ENCODE measurements at regions of chr2 and their contacts with region 1.

Region 1: GRCh38 chr2:65765376-65765775 is 333.0 kb upstream of the SPRED2 start:
- DNase-seq: no peak
- H3K4me3 ChIP-seq: no peak overlapping the region
- H3K4me3 Mint-ChIP-seq: no peak overlapping the region
- H3K27ac Mint-ChIP-seq: no peak overlapping the region
- H3K4me1 ChIP-seq: no peaks in the 10 kb centered on the region
- H3K4me1 Mint-ChIP-seq: no peaks in the 10 kb centered on the region
- H3K27me3 ChIP-seq: no peaks in the 10 kb centered on the region
- H3K27me3 Mint-ChIP-seq: peaks cover 2% of the 10 kb centered on the region
- CTCF ChIP-seq: no peak

Region 2: DNA sequence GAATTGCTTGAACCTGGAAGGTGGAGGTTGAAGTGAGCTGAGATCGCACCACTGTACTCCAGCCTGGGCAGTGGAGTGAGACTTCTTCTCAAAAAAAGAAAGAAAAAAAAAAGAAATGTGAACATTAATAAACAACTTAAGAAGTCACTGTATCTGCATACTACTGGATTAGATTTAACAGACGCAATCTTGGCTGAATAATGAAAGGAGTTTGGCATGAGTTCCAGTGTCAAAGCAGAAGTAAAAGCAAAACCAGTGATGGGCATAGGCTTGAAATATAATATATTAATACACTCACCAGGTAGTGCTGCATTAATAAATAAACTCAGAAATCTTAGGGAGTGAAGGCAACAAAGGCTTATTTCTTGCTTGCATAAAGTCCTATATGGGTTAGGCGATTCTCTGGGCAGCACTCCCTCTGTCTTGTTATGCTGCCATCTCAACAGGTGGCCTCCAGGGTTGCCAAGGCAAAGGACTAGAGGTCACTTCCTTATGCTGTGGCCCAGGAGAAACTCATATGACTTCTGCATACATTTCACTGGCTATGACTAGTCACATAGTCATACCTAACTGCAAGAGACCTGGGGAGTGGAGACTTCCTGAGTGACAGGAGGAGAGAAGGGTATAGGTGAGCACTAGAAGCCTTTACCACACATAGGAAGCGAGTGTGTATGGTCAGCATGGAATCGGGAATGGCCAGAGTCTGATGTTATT is 36.7 kb before region 1 on chr2:
- CTCF ChIA-PET with region 1: interaction called, 4 read pairs
- POLR2A ChIA-PET with region 1: no interaction called
- intact Hi-C with region 1: loop called (anchors 1 kb)
- DNase-seq: no peak
- H3K4me3 ChIP-seq: no peak overlapping the region
- H3K4me3 Mint-ChIP-seq: no peak overlapping the region
- H3K27ac Mint-ChIP-seq: no peak overlapping the region
- H3K4me1 ChIP-seq: no peaks in the 10 kb centered on the region
- H3K4me1 Mint-ChIP-seq: no peaks in the 10 kb centered on the region
- H3K27me3 ChIP-seq: no peaks in the 10 kb centered on the region; the same call in 1 of the 2 replicates
- H3K27me3 Mint-ChIP-seq: no peaks in the 10 kb centered on the region
- CTCF ChIP-seq: no peak